ENCODE measurements at regions of chr15 and their contacts with region 1.

Region 1: DNA sequence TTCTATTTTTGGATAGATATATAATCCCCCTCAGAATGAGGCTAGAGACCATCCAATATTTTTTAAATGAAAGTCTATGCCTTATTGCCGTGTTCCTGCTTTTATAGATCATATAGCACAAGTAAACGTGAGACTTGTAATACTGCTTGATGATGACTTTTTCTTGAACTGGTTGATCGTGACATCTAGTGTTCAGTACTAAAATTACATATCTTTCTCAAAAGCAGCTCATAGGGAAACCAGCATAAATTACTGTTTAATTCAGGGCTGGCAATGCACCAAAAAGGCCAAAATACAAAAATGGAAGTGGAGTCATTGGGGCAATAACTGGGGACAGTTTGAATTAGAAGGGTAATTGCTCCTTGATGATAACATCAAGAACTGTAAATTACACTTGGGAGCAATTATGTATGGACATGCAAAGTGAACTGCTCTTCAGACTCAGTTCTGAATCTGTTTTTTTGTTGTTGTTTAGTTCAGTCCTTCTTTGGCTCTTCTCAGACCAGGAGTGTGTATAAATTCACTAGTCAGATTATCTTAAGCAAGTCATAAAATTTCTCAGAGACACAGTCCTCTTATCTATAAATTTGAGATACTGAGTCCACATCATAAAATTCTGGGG is 325.3 kb downstream of the THSD4 start:
- DNase-seq: no peak
- ATAC-seq: peak; percentile 20 to 25

Region 2: GRCh38 chr15:71228403-71228802 is 212.2 kb before region 1 on chr15:
- intact Hi-C with region 1: no loop called
- DNase-seq: no peak
- ATAC-seq: no peak

Region 3: GRCh38 chr15:71386448-71387236 is 54.0 kb before region 1 on chr15:
- intact Hi-C with region 1: loop called (anchors 5 kb)
- DNase-seq: no peak
- ATAC-seq: no peak

Region 4: DNA sequence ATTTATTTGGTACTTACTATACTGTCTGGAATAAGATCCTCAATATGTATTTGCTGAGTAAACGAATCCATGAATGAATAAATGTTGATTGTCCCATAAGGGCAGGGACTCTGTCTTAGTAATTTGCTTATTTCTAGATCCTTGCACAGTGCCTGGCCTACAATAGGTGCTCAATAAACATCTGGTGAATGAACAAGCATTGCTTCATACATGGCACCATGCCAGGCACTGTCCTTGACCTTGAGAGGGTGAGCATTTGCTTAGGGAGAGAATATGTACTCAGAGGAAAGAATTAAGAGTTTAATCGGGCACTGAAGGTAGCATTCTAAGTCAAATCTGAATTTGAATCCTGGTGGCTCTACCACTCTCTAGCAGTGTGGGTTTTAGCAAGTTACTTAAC is 43.2 kb before region 1 on chr15:
- intact Hi-C with region 1: no loop called
- DNase-seq: peak; percentile 39
- ATAC-seq: no peak